IMR-90 (cell line): ENCODE measurements at regions of chr5 and their contacts with region 1.

Region 1: DNA sequence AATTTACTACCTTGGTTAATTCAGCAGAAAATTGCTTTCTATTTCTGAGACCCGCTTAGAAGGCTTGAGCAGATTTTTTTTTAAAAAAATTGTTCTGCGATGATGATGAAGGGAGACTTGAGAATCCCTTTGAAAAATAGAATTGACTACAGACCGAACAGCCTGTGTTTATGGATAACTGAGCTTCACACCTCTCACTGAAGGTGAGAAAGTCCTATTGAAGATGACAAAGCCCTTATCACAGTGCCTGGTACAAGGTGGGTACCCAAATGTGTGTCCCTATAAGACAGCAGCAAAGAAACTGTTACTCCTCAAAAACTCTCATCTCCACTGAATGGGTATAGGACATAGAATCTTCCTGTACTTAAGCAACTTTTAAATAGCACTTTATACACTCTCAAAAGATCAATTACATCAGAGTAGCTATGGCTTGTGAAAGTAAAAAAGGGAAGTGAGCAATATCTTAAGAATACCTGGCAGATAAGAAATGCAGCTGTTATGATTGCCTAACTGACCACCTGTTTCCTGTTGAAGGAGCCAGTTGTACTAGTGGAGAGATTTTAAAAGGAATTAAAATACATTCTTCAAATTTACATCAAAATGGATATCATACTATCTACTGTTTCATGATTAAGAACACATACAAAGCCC is 419.7 kb downstream of the CHSY3 start:
- DNase-seq: no peak
- ATAC-seq: no peak
- H3K4me3 ChIP-seq: no peak overlapping the region
- H3K27ac ChIP-seq: no peak overlapping the region
- H3K4me1 ChIP-seq: no peaks in the 10 kb centered on the region
- H3K27me3 ChIP-seq: no peaks in the 10 kb centered on the region
- CTCF ChIP-seq: no peak
- POLR2A ChIP-seq: no peak
- RAD21 ChIP-seq: no peak

Region 2: DNA sequence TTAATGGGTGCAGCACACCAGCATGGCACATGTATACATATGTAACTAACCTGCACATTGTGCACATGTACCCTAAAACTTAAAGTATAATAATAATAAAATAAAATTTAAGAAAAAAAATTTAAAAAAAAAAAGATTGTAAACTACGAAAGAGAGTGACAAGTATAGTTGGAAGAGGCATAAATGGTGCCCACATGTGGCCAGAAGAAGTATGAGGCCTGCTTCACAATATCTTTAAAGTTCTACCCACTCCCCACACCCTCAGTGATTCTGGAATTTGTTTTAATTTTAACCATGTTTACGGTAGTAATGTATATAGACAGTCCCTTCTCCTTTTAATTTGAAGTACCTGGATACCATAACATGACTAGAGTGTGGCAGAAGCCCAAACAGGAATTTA is 246.9 kb before region 1 on chr5:
- CTCF ChIA-PET with region 1: no interaction called
- POLR2A ChIA-PET with region 1: no interaction called
- dilution Hi-C with region 1: no loop called
- in situ Hi-C with region 1: no loop called
- intact Hi-C with region 1: no loop called
- DNase-seq: no peak
- ATAC-seq: no peak
- H3K4me3 ChIP-seq: no peak overlapping the region
- H3K27ac ChIP-seq: no peak overlapping the region
- H3K4me1 ChIP-seq: no peaks in the 10 kb centered on the region
- H3K27me3 ChIP-seq: no peaks in the 10 kb centered on the region
- CTCF ChIP-seq: no peak
- POLR2A ChIP-seq: no peak
- RAD21 ChIP-seq: no peak

Region 3: DNA sequence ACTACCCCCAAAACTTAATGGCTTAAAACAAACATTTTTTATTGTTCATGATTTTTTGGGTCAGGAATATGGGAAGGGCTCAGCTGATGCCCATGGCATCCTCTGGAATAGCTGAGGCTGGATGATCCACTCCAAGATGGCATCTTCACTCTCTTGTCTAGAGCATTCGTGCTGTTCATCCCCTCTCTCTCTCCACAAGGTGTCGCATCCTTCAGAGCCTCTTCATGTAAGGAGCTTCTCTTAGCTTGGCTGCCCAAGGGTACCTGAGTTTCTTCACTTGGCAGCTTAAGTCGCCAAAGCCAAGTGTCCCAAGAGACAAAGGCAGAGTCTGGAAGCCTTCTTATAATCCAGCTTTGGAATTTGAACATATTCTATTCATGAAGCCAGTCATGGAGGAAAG is 125.0 kb before region 1 on chr5:
- CTCF ChIA-PET with region 1: no interaction called
- POLR2A ChIA-PET with region 1: no interaction called
- dilution Hi-C with region 1: no loop called
- in situ Hi-C with region 1: no loop called
- intact Hi-C with region 1: no loop called
- DNase-seq: no peak
- ATAC-seq: no peak
- H3K4me3 ChIP-seq: no peak overlapping the region
- H3K27ac ChIP-seq: no peak overlapping the region
- H3K4me1 ChIP-seq: no peaks in the 10 kb centered on the region
- H3K27me3 ChIP-seq: no peaks in the 10 kb centered on the region
- CTCF ChIP-seq: no peak
- POLR2A ChIP-seq: no peak
- RAD21 ChIP-seq: no peak

Region 4: GRCh38 chr5:130260481-130260880 is 63.4 kb before region 1 on chr5:
- CTCF ChIA-PET with region 1: no interaction called
- POLR2A ChIA-PET with region 1: no interaction called
- dilution Hi-C with region 1: no loop called
- in situ Hi-C with region 1: no loop called
- intact Hi-C with region 1: no loop called
- DNase-seq: no peak
- ATAC-seq: no peak
- H3K4me3 ChIP-seq: no peak overlapping the region
- H3K27ac ChIP-seq: no peak overlapping the region
- H3K4me1 ChIP-seq: no peaks in the 10 kb centered on the region
- H3K27me3 ChIP-seq: no peaks in the 10 kb centered on the region
- CTCF ChIP-seq: no peak
- POLR2A ChIP-seq: no peak
- RAD21 ChIP-seq: no peak

Region 5: DNA sequence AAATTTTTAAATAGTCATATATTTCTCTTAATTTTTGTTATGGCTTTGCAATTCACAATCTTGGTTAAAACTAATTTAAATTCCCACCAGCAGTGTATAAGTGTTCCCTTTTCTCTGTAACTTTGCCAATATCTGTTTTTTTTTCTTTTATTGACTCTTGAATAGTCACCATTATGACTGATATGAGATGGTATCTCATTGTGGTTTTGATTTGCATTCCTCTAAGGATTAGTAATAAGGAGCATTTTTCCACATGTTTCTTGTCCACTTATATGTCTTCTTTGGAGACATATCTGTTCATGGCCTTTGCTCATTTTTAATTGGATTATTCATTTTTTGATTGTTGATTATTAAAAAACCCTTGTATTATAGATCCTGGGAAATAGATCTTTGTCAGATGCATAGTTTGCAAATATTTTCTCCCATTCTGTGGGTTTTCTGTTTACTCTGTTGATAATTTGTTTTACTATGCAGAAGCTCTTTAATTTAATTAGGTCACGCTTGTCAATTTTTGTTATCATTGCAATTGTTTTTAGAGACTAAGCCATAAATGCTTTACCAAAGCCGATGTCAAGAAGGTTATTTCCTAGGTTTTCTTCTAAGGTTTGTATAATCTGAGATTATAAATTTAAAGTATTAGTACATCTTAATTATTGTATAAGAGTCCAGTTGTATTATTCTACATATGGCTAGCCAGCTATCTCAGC is 191.2 kb after region 1 on chr5:
- CTCF ChIA-PET with region 1: no interaction called
- POLR2A ChIA-PET with region 1: no interaction called
- dilution Hi-C with region 1: no loop called
- in situ Hi-C with region 1: no loop called
- intact Hi-C with region 1: loop called (anchors 10 kb)
- DNase-seq: peak; percentile 6
- ATAC-seq: no peak
- H3K4me3 ChIP-seq: no peak overlapping the region
- H3K27ac ChIP-seq: no peak overlapping the region
- H3K4me1 ChIP-seq: no peaks in the 10 kb centered on the region
- H3K27me3 ChIP-seq: no peaks in the 10 kb centered on the region
- CTCF ChIP-seq: no peak
- POLR2A ChIP-seq: no peak
- RAD21 ChIP-seq: no peak

Region 6: GRCh38 chr5:130528474-130528873 is 204.5 kb after region 1 on chr5:
- CTCF ChIA-PET with region 1: no interaction called
- POLR2A ChIA-PET with region 1: no interaction called
- dilution Hi-C with region 1: no loop called
- in situ Hi-C with region 1: no loop called
- intact Hi-C with region 1: no loop called
- DNase-seq: no peak
- ATAC-seq: no peak
- H3K4me3 ChIP-seq: no peak overlapping the region
- H3K27ac ChIP-seq: no peak overlapping the region
- H3K4me1 ChIP-seq: no peaks in the 10 kb centered on the region
- H3K27me3 ChIP-seq: no peaks in the 10 kb centered on the region
- CTCF ChIP-seq: no peak
- POLR2A ChIP-seq: no peak
- RAD21 ChIP-seq: no peak